ENCODE measurements at regions of chr16 and their contacts with region 1.

Region 1: DNA sequence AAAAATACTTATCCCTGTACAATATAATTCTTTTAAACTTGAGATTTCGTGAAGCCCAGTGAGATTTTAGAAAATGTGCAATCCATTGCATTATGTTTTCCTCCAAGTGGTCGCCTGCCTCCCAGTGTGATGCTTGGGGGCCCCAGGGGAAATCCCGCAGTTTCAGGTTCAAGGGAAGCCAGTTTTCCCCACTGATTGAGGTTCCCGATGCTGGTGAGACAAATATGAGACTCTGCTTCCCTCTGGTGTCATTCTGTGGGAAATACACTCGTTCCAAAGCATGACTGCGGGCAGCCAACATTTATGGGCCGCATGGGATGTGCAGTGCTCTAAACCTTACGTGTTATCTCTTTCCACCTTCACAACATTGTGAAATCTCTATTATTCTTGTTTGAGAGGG is 200.8 kb downstream of the PRKCB start:
- DNase-seq: peak; percentile 36
- H3K4me3 Mint-ChIP-seq: no peak overlapping the region
- H3K27ac Mint-ChIP-seq: no peak overlapping the region
- H3K4me1 Mint-ChIP-seq: peaks cover 30% of the 10 kb centered on the region
- H3K27me3 Mint-ChIP-seq: no peaks in the 10 kb centered on the region

Region 2: DNA sequence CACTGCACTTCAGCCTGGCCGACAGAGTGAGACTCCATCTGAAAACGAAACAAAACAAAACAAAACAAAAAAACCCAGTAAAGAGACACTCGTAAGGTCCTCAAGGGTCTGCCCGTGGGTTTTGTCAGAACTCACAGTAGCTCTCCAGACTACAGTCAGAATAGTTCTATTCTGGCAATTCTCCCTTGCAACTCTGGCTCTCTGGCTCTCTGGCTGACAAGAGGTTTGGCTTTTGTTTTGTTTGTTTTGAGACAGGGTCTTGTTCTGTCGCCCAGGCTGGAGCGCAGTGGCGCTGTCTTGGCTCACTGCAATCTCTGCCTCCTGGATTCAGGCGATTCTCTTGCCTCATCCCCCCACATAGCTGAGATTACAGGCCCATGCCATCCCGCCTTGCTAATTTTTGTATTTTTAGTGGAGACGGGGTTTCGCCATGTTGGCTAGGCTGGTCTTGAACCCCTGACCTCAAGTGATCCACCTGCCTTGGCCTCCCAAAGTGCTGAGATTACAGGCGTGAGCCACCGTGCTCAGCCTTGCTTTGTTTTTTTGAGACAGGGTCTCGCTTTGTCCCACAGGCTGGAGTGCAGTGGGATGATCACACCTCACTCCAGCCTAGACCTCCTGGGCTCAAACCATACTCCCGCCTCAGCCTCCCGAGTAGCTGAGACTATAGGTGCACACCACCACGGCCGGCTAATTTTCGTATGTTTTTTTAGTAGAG is 302.3 kb before region 1 on chr16:
- CTCF ChIA-PET with region 1: interaction called, 6 read pairs
- POLR2A ChIA-PET with region 1: no interaction called
- intact Hi-C with region 1: loop called (anchors 1 kb)
- DNase-seq: no peak
- H3K4me3 Mint-ChIP-seq: no peak overlapping the region
- H3K27ac Mint-ChIP-seq: no peak overlapping the region
- H3K4me1 Mint-ChIP-seq: peaks cover 6% of the 10 kb centered on the region
- H3K27me3 Mint-ChIP-seq: peaks cover 1% of the 10 kb centered on the region

Region 3: DNA sequence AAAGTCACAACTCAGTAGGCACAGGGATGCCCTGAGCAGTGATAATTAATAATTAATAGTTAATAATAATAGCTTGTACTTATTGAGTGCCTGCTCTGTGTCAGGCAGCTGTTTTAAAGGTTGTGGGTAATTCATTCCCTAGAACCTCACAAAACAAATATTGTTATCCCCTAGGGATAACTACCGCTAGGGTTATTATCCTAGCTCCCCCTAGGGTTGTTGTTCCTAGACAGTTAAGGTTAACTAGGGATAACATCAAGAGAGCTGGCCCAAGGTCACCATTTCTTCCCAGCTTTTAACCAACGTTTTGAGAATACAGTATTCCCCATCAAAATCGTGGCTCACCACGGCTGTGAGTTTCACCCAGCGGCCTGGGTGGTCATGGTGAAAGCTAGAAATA is 20.7 kb before region 1 on chr16:
- CTCF ChIA-PET with region 1: interaction called, 25 read pairs
- POLR2A ChIA-PET with region 1: no interaction called
- intact Hi-C with region 1: no loop called
- DNase-seq: no peak
- H3K4me3 Mint-ChIP-seq: no peak overlapping the region
- H3K27ac Mint-ChIP-seq: no peak overlapping the region
- H3K4me1 Mint-ChIP-seq: peaks cover 31% of the 10 kb centered on the region
- H3K27me3 Mint-ChIP-seq: no peaks in the 10 kb centered on the region

Measured in activated CD4-positive, alpha-beta memory T cell treated with anti-CD3 and anti-CD28 coated beads for 36 hours (primary cell).